ENCODE measurements at regions of chr9 and their contacts with region 1.

Region 1: GRCh38 chr9:128067876-128068613 is at the start of gene SLC25A25:
- DNase-seq: peak; percentile 100
- ATAC-seq: peak; percentile 83
- H3K4me3 ChIP-seq: peak within 1 kb of the TSS; percentile 90
- H3K4me3 Mint-ChIP-seq: peak within 1 kb of the TSS; percentile 93
- H3K27ac ChIP-seq: peak within 1 kb of the TSS; percentile 94 to 99
- H3K27ac Mint-ChIP-seq: peak within 1 kb of the TSS; percentile 84
- H3K4me1 ChIP-seq: peaks cover 83% of the 10 kb centered on the region
- H3K4me1 Mint-ChIP-seq: peaks cover 43% of the 10 kb centered on the region
- H3K27me3 ChIP-seq: no peaks in the 10 kb centered on the region
- H3K27me3 Mint-ChIP-seq: no peaks in the 10 kb centered on the region
- CTCF ChIP-seq: no peak
- total RNA-seq, gene SLC25A25: 16.9 to 17.7 TPM

Region 2: DNA sequence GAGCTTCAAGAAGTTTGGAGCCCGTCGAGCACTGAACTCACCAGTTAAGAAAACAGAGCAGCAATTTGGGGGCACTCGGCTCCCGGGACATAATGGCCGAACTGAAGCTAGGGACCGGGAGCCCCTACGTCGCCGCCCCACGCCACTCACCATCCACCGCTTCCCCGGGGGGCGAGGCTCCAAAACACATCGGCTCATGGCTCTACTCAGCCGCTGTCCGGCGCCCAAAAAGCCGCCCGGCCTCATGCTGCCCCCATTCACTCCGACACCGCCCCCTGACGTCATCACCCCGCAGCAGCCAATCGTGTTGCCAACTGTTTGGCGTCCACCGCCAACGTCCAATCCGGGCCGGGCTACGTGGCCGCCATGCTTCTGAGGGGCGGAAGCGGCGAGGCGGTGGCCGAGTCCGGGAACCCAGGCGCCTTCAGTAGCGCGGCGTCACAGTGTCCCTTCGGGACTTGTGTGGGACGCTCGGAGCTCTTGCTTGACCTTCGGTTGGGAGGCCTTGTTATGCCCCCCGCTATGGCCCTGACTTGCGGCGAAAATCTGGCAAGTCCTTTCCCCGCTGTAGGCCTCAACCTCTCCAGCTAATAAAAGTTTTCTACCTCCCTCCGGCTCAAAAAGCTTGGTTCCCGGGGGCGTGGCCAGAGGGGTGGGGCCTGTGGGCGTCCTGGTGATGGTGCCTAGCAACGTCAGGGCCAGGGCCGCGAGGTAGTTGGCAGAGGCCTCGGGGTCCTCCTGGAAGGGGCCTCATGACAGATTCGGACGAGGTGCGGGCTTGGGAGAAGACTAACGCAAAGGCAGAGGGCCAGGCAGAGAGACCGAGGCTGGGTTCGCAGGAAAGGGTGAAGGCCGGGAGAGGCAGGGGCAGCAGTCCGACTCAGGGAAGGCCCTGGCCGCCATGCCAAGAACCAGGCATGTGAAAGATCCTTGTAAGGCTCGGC is 352.4 kb before region 1 on chr9 and contains the starts of genes PTRH1 and TTC16:
- CTCF ChIA-PET with region 1: no interaction called
- POLR2A ChIA-PET with region 1: no interaction called
- intact Hi-C with region 1: loop called in 1 of 2 experiments (anchors 5 kb)
- DNase-seq: peak; percentile 92 to 98 (median 96)
- ATAC-seq: peak; percentile 94
- H3K4me3 ChIP-seq: peak within 1 kb of the TSS; percentile 73
- H3K4me3 Mint-ChIP-seq: peak within 1 kb of the TSS; percentile 92
- H3K27ac ChIP-seq: peak within 1 kb of the TSS; percentile 51 to 76
- H3K27ac Mint-ChIP-seq: peak within 1 kb of the TSS; percentile 83
- H3K4me1 ChIP-seq: peaks cover 59% of the 10 kb centered on the region
- H3K4me1 Mint-ChIP-seq: peaks cover 30% of the 10 kb centered on the region
- H3K27me3 ChIP-seq: no peaks in the 10 kb centered on the region
- H3K27me3 Mint-ChIP-seq: no peaks in the 10 kb centered on the region
- CTCF ChIP-seq: no peak
- total RNA-seq, gene PTRH1: 4.5 to 5.9 TPM
- total RNA-seq, gene TTC16: 1.6 to 2.1 TPM

Region 3: DNA sequence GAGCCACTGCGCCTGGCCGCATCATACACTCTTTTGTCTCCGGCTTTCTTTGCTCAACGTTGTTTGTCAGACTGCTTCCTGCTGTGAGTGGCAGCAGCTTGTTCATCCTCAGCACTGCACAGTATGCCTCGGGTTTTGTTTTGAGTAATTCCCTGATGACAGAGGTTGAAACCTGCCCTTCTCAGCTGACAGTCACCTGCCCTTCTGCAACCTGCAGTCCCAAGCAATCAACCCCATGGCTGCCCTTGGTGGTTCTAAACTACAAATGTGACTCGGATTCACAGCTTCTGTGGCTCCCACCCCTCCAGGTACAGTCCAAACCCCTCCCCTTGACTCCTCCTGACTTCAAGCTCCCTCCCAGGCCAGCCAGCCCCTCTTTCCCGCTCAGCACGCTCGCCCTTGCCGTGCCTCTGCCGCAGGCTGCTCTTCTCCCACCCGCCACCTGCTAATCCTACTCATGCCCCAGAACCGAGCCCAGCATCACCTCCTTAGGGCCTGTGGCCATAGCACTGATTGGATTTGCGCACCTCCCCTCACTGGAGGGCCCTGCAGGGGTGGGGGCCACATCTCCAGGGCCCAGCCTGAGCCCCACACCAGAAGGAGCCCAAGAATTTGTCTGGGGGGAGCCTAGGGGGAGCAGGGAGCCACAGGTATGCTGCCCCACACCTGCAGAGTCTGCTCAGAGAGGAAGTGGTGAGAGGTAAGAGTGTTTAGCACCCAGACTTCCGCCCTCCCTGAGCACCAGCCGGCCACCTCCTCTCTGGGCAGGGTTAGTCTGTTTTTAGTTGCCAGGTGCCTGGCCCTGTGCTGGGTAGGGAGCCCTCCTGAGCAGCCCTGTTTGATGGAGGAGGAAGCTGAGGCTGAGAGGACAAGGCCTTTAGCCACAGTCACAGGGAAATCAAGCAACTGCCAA is 97.4 kb before region 1 on chr9:
- CTCF ChIA-PET with region 1: no interaction called
- POLR2A ChIA-PET with region 1: interaction called, 22 read pairs
- intact Hi-C with region 1: no loop called
- DNase-seq: peak; percentile 50 to 85 (median 70)
- ATAC-seq: peak; percentile 69
- H3K4me3 ChIP-seq: peak overlapping the region; percentile 67
- H3K4me3 Mint-ChIP-seq: peak overlapping the region; percentile 91
- H3K27ac ChIP-seq: peak overlapping the region; percentile 60 to 96
- H3K27ac Mint-ChIP-seq: peak overlapping the region; percentile 97
- H3K4me1 ChIP-seq: peaks cover 100% of the 10 kb centered on the region
- H3K4me1 Mint-ChIP-seq: peaks cover 100% of the 10 kb centered on the region
- H3K27me3 ChIP-seq: no peaks in the 10 kb centered on the region
- H3K27me3 Mint-ChIP-seq: no peaks in the 10 kb centered on the region
- CTCF ChIP-seq: no peak

Region 4: DNA sequence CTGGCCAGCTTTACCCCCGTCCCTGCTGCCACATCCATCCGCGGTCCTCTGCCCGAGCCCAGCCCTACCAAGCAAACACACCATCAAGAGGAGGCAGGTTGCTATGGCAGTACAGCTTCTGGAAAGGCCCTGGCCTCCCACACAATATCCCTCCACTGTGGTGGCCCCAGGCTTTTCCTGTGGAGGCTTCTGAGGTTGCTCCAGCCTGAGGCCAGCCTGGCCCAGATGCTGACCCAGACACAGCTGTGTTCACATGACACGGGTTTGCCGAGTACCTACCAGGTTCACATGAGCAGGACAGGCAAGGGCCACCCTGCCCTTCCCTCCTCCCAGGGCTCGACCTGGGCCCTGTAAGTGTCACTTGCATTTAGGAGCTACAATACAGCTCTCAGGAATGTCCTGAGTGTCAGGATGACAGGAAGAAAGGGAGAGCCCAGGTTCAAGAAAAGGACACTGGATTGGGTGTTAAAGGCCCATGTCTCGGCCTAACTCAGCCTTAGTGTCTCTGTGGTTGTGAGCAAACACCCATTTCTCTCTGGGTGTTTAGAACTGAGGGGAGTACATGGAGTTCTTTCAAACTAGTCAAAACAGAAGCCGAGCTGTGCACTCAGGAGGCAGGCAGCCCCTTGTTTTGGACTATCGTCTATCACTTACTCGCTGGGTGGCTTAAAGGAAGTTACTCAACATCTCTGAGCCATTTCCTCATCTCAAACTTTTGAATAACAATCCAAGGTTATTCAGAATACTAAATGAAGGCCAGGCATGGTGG is 41.1 kb before region 1 on chr9:
- CTCF ChIA-PET with region 1: interaction called, 5 read pairs
- POLR2A ChIA-PET with region 1: interaction called, 21 read pairs
- intact Hi-C with region 1: loop called in 1 of 2 experiments (anchors 1 kb)
- DNase-seq: peak in 13 of 14 experiments; percentile 30 to 75 (median 48)
- ATAC-seq: peak; percentile 10
- H3K4me3 ChIP-seq: peak overlapping the region; percentile 50
- H3K4me3 Mint-ChIP-seq: peak overlapping the region; percentile 80
- H3K27ac ChIP-seq: peak overlapping the region; percentile 93 to 94
- H3K27ac Mint-ChIP-seq: peak overlapping the region; percentile 94
- H3K4me1 ChIP-seq: peaks cover 100% of the 10 kb centered on the region
- H3K4me1 Mint-ChIP-seq: peaks cover 92% of the 10 kb centered on the region
- H3K27me3 ChIP-seq: no peaks in the 10 kb centered on the region
- H3K27me3 Mint-ChIP-seq: no peaks in the 10 kb centered on the region
- CTCF ChIP-seq: no peak

Region 5: DNA sequence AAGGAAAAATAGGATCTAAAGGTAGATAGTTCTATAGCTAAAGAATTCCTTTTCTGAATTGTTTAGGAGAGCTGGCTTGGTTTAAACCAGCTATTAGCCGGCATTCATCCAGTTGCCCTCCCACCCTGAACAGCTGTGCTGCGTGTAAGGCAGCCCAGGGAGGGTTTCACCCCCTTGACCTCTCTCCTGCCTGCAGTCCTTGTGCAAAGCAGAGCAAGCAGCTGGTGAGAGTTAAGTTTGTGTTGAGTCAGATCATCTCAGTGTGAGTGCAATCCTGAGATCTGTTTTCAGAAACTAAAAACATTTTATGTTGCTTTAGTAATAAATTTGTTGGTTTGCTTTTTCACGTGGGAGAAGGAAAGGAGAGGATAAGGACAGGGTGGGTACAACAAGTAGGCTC is 13.0 kb after region 1 on chr9:
- CTCF ChIA-PET with region 1: interaction called, 8 read pairs
- POLR2A ChIA-PET with region 1: interaction called, 14 read pairs
- intact Hi-C with region 1: loop called (anchors 1 to 2 kb)
- DNase-seq: no peak
- ATAC-seq: no peak
- H3K4me3 ChIP-seq: no peak overlapping the region
- H3K4me3 Mint-ChIP-seq: no peak overlapping the region
- H3K27ac ChIP-seq: no peak overlapping the region
- H3K27ac Mint-ChIP-seq: peak overlapping the region; percentile 67
- H3K4me1 ChIP-seq: peaks cover 47% of the 10 kb centered on the region
- H3K4me1 Mint-ChIP-seq: peaks cover 57% of the 10 kb centered on the region
- H3K27me3 ChIP-seq: no peaks in the 10 kb centered on the region
- H3K27me3 Mint-ChIP-seq: no peaks in the 10 kb centered on the region
- CTCF ChIP-seq: no peak

Measured in CD4-positive, alpha-beta T cell (primary cell).